Caco-2 (cell line): ENCODE measurements at regions of chr5 and their contacts with region 1.

Region 1: GRCh38 chr5:17216176-17216973 is 1.1 kb upstream of the BASP1 start:
- DNase-seq: peak; percentile 82 to 87
- H3K4me3 ChIP-seq: peak overlapping the region; percentile 65
- H3K4me3 Mint-ChIP-seq: peak overlapping the region; percentile 96
- H3K27ac Mint-ChIP-seq: peak overlapping the region; percentile 36
- H3K4me1 ChIP-seq: peaks cover 10% of the 10 kb centered on the region
- H3K4me1 Mint-ChIP-seq: peaks cover 14% of the 10 kb centered on the region
- H3K27me3 ChIP-seq: no peaks in the 10 kb centered on the region
- H3K27me3 Mint-ChIP-seq: no peaks in the 10 kb centered on the region
- CTCF ChIP-seq: peak; percentile 77 to 85

Region 2: DNA sequence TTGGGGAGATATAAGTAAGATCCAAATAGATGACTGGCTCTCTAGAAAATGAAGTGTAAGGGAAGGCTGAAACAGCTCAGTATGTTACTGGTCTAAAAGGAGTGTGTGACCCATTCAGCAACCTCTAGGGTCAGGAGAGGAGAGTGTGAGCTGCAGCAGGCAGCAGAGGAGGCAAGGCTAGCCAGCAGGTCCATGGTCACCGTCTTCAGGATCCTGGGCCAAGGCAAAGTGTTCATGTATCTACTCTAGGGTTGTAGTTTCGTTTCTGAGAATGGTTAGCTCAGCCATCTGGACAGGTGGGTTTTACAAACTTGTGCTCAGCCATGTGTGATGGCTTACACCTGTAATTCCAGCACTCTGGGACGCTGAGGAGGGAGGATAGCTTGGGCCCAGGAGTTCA is 293.9 kb before region 1 on chr5:
- CTCF ChIA-PET with region 1: no interaction called
- POLR2A ChIA-PET with region 1: no interaction called
- intact Hi-C with region 1: no loop called
- DNase-seq: no peak
- H3K4me3 ChIP-seq: no peak overlapping the region
- H3K4me3 Mint-ChIP-seq: no peak overlapping the region
- H3K27ac Mint-ChIP-seq: no peak overlapping the region
- H3K4me1 ChIP-seq: peaks cover 32% of the 10 kb centered on the region
- H3K4me1 Mint-ChIP-seq: peaks cover 20% of the 10 kb centered on the region
- H3K27me3 ChIP-seq: no peaks in the 10 kb centered on the region
- H3K27me3 Mint-ChIP-seq: no peaks in the 10 kb centered on the region
- CTCF ChIP-seq: no peak

Region 3: GRCh38 chr5:17400724-17401464 is 184.5 kb after region 1 on chr5:
- CTCF ChIA-PET with region 1: interaction called, 13 read pairs
- POLR2A ChIA-PET with region 1: no interaction called
- intact Hi-C with region 1: loop called (anchors 1 kb)
- DNase-seq: peak in 1 of 2 experiments; percentile 47
- H3K4me3 ChIP-seq: no peak overlapping the region
- H3K4me3 Mint-ChIP-seq: peak overlapping the region; percentile 72
- H3K27ac Mint-ChIP-seq: peak overlapping the region; percentile 87
- H3K4me1 ChIP-seq: peaks cover 45% of the 10 kb centered on the region
- H3K4me1 Mint-ChIP-seq: peaks cover 56% of the 10 kb centered on the region
- H3K27me3 ChIP-seq: no peaks in the 10 kb centered on the region
- H3K27me3 Mint-ChIP-seq: no peaks in the 10 kb centered on the region
- CTCF ChIP-seq: no peak

Region 4: DNA sequence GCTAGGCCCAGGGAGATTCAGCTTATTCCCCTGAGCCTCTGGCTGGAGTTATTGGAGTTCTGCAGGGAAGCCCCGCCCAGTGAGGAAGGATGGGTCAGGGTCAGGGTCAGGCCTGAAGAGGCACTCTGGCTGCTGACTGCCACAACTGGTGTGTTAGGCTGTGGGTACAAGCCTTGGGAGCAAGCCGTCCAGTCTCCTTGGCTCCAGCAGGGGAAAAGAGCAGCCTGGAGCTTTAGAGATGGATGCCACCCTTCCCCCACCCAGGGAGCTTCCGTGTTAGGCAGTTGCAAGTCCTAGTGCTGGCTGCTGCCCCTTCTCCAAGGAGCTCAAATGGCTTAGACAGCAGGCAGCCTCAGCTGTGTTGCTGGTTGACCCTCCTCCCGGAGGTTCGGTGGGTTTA is 247.3 kb after region 1 on chr5:
- CTCF ChIA-PET with region 1: no interaction called
- POLR2A ChIA-PET with region 1: no interaction called
- intact Hi-C with region 1: loop called (anchors 5 kb)
- DNase-seq: no peak
- H3K4me3 ChIP-seq: no peak overlapping the region
- H3K4me3 Mint-ChIP-seq: no peak overlapping the region
- H3K27ac Mint-ChIP-seq: no peak overlapping the region
- H3K4me1 ChIP-seq: no peaks in the 10 kb centered on the region
- H3K4me1 Mint-ChIP-seq: no peaks in the 10 kb centered on the region
- H3K27me3 ChIP-seq: no peaks in the 10 kb centered on the region
- H3K27me3 Mint-ChIP-seq: peaks cover 7% of the 10 kb centered on the region
- CTCF ChIP-seq: no peak

Region 5: DNA sequence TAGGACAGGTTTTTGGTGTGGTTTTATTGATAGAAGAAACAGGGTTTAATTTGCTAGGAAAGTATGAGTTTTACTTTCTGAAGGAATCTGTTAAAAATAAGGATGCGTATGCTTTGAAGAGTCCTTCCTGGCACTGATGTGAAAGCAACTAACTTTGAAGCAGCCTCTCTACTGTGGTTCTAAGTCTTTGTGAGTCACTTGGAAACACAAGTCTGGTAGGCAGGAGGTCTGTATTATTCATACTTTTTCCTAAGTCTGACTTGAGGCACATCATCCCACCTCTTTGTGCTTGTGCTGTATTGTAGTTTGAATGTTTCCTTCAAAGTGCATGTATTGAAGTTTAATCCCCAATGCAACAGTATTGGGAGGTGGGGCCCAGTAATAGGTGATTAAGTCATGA is 546.9 kb after region 1 on chr5:
- CTCF ChIA-PET with region 1: no interaction called
- POLR2A ChIA-PET with region 1: no interaction called
- intact Hi-C with region 1: loop called (anchors 10 kb)
- DNase-seq: no peak
- H3K4me3 ChIP-seq: no peak overlapping the region
- H3K4me3 Mint-ChIP-seq: no peak overlapping the region
- H3K27ac Mint-ChIP-seq: no peak overlapping the region
- H3K4me1 ChIP-seq: no peaks in the 10 kb centered on the region
- H3K4me1 Mint-ChIP-seq: no peaks in the 10 kb centered on the region
- H3K27me3 ChIP-seq: no peaks in the 10 kb centered on the region
- H3K27me3 Mint-ChIP-seq: peaks cover 11% of the 10 kb centered on the region
- CTCF ChIP-seq: no peak

Region 6: DNA sequence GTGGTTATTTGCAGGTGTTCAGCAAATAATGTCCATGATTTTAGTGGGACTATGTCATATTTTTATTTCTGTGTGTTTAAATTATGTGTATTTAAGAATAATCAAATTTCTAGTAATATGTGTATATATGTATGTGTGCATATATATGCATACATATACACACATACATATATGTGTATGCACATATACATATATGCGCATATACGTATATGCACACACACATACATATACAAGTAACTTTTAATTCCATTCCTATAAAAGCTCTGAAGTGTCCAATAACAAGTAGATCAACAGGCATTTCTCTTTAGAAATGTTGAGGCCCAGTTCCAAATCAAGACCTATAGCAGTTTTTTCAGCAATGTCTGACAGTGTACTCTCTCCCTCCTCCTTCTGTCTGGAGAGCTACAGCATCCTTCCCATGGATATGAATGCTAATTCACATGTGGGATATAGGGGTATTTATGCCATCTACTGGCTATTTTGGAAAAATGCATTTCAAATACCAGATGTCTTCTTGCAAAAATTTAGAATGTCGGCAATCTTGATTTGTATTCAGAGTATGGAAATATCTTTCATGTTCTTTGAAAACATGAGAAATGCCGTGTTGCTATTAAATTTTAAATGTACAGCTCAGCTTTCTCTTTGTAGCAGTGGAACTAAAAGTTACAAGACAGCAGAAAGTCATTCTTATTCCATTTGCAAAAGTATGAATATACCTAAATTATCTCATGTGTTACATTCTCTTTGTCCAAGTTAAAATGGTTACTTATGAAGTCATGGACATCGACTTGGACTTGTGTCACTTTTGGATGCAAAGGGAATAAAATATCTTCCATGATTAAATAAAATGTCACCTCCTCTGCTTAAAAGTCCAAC is 1065.5 kb after region 1 on chr5:
- CTCF ChIA-PET with region 1: interaction called, 17 read pairs
- POLR2A ChIA-PET with region 1: no interaction called
- intact Hi-C with region 1: no loop called
- DNase-seq: peak in 1 of 2 experiments; percentile 6
- H3K4me3 ChIP-seq: no peak overlapping the region
- H3K4me3 Mint-ChIP-seq: no peak overlapping the region
- H3K27ac Mint-ChIP-seq: no peak overlapping the region
- H3K4me1 ChIP-seq: no peaks in the 10 kb centered on the region
- H3K4me1 Mint-ChIP-seq: no peaks in the 10 kb centered on the region
- H3K27me3 ChIP-seq: no peaks in the 10 kb centered on the region
- H3K27me3 Mint-ChIP-seq: peaks cover 3% of the 10 kb centered on the region
- CTCF ChIP-seq: peak; percentile 29 to 56

Region 7: GRCh38 chr5:18314192-18314778 is 1097.9 kb after region 1 on chr5:
- CTCF ChIA-PET with region 1: no interaction called
- POLR2A ChIA-PET with region 1: no interaction called
- intact Hi-C with region 1: loop called (anchors 1 kb)
- DNase-seq: peak in 1 of 2 experiments; percentile 4
- H3K4me3 ChIP-seq: no peak overlapping the region
- H3K4me3 Mint-ChIP-seq: no peak overlapping the region
- H3K27ac Mint-ChIP-seq: no peak overlapping the region
- H3K4me1 ChIP-seq: no peaks in the 10 kb centered on the region
- H3K4me1 Mint-ChIP-seq: no peaks in the 10 kb centered on the region
- H3K27me3 ChIP-seq: no peaks in the 10 kb centered on the region
- H3K27me3 Mint-ChIP-seq: peaks cover 6% of the 10 kb centered on the region
- CTCF ChIP-seq: peak; percentile 37 to 74